AG04449 (cell line): ENCODE measurements at regions of chr4 and their contacts with region 1.

Region 1: GRCh38 chr4:138035781-138036258 is 206.3 kb downstream of the SLC7A11 start:
- DNase-seq: no peak
- H3K4me3 ChIP-seq: no peak overlapping the region
- CTCF ChIP-seq: peak; percentile 49

Region 2: GRCh38 chr4:137711502-137711901 is 324.3 kb before region 1 on chr4:
- CTCF ChIA-PET with region 1: no interaction called
- POLR2A ChIA-PET with region 1: no interaction called
- DNase-seq: no peak
- H3K4me3 ChIP-seq: no peak overlapping the region
- CTCF ChIP-seq: no peak

Region 3: GRCh38 chr4:137819964-137820383 is 215.8 kb before region 1 on chr4:
- CTCF ChIA-PET with region 1: interaction called, 34 read pairs
- POLR2A ChIA-PET with region 1: no interaction called
- DNase-seq: no peak
- H3K4me3 ChIP-seq: no peak overlapping the region
- CTCF ChIP-seq: peak; percentile 50

Region 4: GRCh38 chr4:138021139-138021830 is 14.5 kb before region 1 on chr4:
- CTCF ChIA-PET with region 1: interaction called, 16 read pairs
- POLR2A ChIA-PET with region 1: no interaction called
- DNase-seq: no peak
- H3K4me3 ChIP-seq: no peak overlapping the region
- CTCF ChIP-seq: no peak

Region 5: DNA sequence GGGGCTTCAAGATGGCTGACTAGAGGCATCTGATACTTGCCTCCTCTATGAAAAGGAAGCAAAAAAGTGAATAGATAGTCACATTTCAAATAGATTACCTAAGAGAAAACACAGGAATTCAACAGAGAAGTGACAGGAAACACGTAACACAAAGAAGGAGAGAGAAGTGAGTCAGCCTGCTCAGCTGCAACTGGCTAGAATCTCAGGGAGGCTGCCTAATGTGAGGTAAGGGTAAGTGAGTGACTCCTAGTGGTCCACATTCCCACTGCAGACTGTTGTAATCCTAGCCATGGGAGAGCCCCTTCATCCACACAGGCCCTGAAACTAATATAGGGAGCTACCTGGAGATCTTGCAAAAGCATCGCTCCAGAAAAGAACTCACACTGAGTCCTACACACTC is 27.1 kb after region 1 on chr4:
- CTCF ChIA-PET with region 1: interaction called, 12 read pairs
- POLR2A ChIA-PET with region 1: no interaction called
- DNase-seq: no peak
- H3K4me3 ChIP-seq: no peak overlapping the region
- CTCF ChIP-seq: peak; percentile 26

Region 6: DNA sequence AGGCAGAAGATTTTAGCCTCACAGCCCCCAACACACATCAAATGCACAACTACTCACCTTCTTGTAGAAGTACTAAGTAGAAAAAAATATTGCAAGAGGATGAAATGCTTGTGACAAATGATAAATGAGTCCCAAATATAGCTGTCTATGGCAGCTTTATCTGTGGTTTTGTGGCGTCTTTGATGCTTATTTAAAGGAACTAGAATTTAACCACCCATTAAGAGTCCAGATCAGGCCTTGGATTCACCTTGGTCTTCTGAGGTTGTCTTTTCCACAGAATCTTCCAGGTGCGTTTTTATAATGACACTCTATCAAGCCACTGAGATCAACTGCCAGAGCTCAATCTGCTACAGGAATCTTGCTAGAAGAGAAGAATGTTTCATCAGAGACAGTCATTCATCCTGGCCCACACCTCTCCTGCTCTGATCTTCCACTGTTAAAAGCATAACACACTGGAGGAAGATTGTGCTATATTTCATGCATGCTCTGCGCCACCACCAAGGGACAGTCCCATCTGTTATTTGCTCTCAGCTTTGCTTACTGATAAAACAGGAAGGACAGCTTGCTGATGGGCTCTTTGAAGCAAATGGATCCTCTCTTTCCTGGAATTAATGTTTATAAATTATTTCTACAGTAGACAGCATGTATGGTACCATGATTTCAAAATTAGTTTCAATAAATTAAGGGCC is 62.2 kb after region 1 on chr4:
- CTCF ChIA-PET with region 1: interaction called, 47 read pairs
- POLR2A ChIA-PET with region 1: no interaction called
- DNase-seq: no peak
- H3K4me3 ChIP-seq: no peak overlapping the region
- CTCF ChIP-seq: no peak

Region 7: DNA sequence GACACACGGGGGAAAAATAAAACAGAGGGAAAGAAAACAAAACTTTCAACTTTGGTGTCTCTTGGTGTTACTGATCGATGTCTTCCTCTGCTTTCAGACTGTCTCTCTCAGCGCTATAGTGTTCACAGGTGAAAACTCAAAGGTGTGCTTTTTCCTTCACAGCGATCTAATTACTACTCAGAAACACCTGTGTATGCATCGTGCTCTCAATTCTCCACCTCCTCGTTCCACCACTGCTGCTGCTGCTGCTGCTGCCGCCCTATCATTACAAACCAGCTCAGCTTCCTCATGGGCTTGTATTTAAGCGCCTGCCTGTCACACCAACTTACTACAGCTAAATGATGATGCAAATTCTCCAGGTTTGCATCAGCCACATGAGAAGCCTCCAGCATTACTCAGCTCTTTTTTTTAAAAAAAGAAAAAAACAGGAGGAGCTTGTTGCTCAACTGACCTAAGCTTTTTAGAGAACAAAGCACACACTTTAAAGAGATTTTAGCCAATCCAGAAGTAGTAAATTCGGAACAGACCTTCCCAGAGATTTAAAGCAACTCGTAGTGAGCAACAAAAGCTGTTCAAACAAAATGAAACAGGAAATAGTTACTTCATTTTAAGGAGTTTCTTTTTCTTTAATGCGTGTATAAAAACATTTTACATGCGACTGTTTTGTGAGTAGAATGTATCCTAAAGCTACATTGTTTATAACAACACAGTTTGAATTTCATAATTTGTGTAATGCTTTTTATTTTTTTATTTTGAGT is 206.4 kb after region 1 on chr4 and contains the start of gene SLC7A11:
- CTCF ChIA-PET with region 1: no interaction called
- POLR2A ChIA-PET with region 1: no interaction called
- DNase-seq: peak; percentile 98
- H3K4me3 ChIP-seq: peak within 1 kb of the TSS; percentile 71
- CTCF ChIP-seq: no peak

Region 8: DNA sequence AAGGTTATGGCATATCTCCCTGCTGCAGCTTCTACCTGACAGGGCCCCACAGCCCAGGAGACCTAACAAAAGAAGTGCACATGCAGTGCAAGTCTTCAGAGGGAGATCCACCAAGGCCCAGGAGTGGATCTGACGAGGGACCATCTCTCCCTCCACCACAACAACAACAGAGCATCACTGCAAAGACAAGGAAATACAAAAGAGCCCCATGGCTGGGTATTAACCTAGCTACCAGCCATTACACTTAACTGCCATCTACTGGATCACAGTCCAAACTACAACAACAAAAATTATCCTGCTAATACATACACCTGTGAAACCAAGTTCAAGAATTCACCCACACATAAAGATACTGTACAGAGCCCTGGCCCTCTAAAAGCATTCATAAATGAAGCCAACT is 486.5 kb after region 1 on chr4:
- CTCF ChIA-PET with region 1: interaction called, 19 read pairs
- POLR2A ChIA-PET with region 1: no interaction called
- DNase-seq: no peak
- H3K4me3 ChIP-seq: no peak overlapping the region
- CTCF ChIP-seq: peak; percentile 18

Region 9: GRCh38 chr4:138870737-138871554 is 835.1 kb after region 1 on chr4:
- CTCF ChIA-PET with region 1: interaction called, 13 read pairs
- POLR2A ChIA-PET with region 1: no interaction called
- DNase-seq: peak; percentile 16
- H3K4me3 ChIP-seq: no peak overlapping the region
- CTCF ChIP-seq: peak; percentile 66